Esophagus muscularis mucosa (tissue), 4 donors: ENCODE measurements at regions of chr6 and their contacts with region 1.

Region 1: DNA sequence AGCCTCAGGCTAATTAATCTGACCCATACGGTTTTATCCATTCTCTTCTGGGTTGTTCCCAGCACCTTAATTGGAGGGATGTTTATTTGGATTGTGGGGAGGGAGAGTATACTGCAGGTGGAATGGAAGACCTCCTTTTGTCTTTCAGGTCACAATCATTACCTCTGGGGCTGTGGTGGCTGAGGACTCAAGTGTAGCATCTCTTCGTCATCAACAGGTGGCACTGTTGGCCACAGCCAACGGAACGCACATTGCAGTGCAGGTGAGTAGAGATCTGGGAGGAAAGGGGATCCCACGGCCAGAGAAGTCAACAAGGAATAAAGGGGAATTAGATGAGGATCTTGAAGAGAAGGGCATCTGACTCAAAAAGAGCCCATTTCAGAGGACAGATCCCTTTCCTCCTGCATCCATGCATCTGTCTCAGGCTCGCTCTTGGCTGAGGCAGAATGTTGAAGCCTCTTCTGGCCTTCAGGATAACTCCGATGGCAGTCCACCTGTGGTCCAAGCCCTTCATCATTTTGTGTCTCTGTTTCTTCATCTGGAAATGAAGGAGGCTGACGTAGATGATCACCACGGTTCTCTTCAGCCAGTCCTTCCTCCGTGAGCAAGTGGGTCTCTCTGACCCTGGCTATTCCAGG is 3.2 kb upstream of the DEF6 start:
- DNase-seq: peak; percentile 91
- H3K4me3 ChIP-seq: no peak overlapping the region
- H3K27ac ChIP-seq: no peak overlapping the region
- H3K4me1 ChIP-seq: peaks cover 14 to 18% (median 15%) of the 10 kb centered on the region in 4 donors
- H3K27me3 ChIP-seq: no peaks in the 10 kb centered on the region
- CTCF ChIP-seq: peak; percentile 49 to 72 (median 69)
- EP300 ChIP-seq: no peak
- POLR2A ChIP-seq: no peak

Region 2: DNA sequence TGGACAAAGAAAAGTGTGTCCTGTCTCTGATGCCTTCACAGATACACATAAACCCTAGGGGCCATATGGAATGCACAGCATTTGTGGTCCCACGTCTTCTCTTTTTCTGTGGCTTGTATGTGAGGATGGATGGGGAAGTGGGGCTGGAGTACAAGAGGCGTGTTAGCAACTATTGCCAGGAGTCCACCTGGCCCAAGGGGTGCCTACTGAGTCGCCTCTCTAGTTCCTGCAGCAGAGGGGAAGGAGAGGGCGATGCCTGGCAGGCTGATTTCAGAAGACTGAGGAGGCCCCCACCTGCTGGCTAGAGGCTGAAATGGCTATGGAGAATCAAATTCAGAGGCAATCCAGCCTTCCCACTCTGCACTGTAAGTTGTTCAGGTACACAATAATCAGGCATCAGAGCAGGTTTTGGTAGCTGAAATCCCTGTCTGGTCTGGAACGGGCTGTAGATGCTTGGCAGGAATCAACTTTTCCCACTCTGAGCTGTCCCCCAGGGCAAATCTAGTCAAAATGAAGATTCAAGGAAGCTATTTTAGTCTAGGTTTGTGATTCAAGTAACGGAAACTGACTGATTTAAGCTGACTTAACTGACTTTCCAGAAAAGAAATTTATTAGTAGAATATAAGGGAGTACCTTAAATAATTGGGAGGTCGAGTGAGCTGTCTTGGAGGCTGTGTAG is 33.1 kb after region 1 on chr6:
- intact Hi-C with region 1: loop called (anchors 5 kb)
- DNase-seq: no peak
- H3K4me3 ChIP-seq: no peak overlapping the region
- H3K27ac ChIP-seq: no peak overlapping the region
- H3K4me1 ChIP-seq: no peaks in the 10 kb centered on the region
- H3K27me3 ChIP-seq: peaks cover 0 to 7% (median 0%) of the 10 kb centered on the region in 4 donors
- CTCF ChIP-seq: peak; percentile 41 to 64 (median 53)
- EP300 ChIP-seq: no peak
- POLR2A ChIP-seq: no peak

Region 3: DNA sequence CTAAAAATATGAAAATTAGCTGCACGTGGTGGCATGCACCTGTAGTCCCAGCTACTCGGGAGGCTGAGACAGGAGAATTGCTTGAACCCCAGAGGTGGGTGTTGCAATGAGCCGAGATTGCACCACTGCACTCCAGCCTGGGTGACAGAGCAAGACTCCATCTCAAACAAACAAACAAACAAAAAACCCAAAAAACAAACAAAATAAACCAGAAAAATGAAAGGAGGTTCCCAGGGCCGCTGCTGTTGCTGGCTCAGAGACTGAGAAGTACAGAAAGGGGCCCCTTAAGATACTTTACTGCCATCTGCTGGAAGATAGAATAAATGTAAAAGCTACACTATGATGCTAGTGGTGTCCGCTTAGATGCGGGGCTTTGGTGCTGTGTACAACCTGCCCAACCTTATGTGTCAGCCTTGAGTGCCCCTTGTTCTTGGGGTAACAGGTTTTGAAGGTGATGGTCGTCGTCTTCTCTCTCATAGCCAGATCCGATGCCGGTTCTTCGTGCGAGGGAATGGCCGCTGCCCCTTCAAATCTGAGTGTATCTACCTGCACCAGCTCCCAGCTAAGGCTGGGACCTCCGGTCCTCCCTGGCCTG is 155.0 kb after region 1 on chr6:
- intact Hi-C with region 1: loop called (anchors 2 kb)
- DNase-seq: no peak
- H3K4me3 ChIP-seq: no peak overlapping the region
- H3K27ac ChIP-seq: no peak overlapping the region
- H3K4me1 ChIP-seq: peaks cover 23 to 41% (median 30%) of the 10 kb centered on the region in 4 donors
- H3K27me3 ChIP-seq: no peaks in the 10 kb centered on the region
- CTCF ChIP-seq: peak; percentile 67 to 86 (median 75)
- EP300 ChIP-seq: no peak
- POLR2A ChIP-seq: no peak